ENCODE measurements at regions of chr11 and their contacts with region 1.

Region 1: GRCh38 chr11:62591448-62592145 is at the start of gene TUT1:
- H3K4me3 Mint-ChIP-seq: peak within 1 kb of the TSS; percentile 91
- H3K27ac Mint-ChIP-seq: peak within 1 kb of the TSS; percentile 97
- H3K4me1 Mint-ChIP-seq: peaks cover 39% of the 10 kb centered on the region
- H3K27me3 Mint-ChIP-seq: no peaks in the 10 kb centered on the region

Region 2: GRCh38 chr11:62193952-62194351 is 397.6 kb before region 1 on chr11:
- intact Hi-C with region 1: no loop called
- H3K4me3 Mint-ChIP-seq: no peak overlapping the region
- H3K27ac Mint-ChIP-seq: no peak overlapping the region
- H3K4me1 Mint-ChIP-seq: no peaks in the 10 kb centered on the region
- H3K27me3 Mint-ChIP-seq: peaks cover 29% of the 10 kb centered on the region

Region 3: DNA sequence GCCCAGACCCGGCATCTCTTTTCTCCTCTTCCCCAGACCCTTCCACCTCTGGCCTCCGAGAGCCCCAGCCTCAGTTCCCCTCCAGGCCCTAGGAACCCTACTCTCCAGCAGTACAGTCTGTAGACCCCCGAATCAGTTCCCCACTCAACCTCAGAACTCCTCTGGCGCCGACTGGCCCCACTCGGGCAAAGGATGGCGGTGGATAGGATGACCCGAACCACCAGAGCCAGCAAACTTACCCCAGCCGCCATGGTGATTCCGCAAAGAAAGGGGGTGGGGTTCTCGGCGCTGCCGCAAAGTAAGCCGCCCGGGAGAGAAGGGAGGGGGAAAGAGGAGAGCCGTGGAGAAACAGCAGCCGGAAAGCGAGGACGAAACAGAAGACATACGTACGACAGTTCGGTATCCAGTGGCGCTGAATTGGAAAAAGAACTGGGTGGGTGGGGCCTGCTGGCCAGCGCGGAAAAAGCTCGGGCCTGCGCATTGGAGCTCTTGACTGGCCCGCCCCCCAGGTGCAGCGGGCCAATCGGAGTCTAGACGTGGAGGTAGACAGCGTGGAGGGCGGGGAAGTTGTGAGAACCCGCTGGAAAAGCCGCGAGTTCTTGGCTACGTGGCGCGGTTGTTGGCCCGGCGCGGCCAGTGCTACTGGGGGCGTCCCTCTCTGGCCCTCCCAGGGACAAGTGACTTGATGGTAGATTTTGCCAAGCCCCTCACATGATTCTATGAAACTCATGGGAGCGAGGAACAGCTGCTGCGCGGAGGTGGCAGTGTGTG is 17.8 kb before region 1 on chr11 and contains the start of gene EEF1G:
- intact Hi-C with region 1: loop called (anchors 1 kb)
- H3K4me3 Mint-ChIP-seq: peak within 1 kb of the TSS; percentile 98
- H3K27ac Mint-ChIP-seq: peak within 1 kb of the TSS; percentile 96
- H3K4me1 Mint-ChIP-seq: peaks cover 49% of the 10 kb centered on the region
- H3K27me3 Mint-ChIP-seq: no peaks in the 10 kb centered on the region

Region 4: GRCh38 chr11:62671575-62672389 is 80.2 kb after region 1 on chr11 and contains the starts of genes LBHD1 and UQCC3:
- intact Hi-C with region 1: loop called (anchors 5 kb)
- H3K4me3 Mint-ChIP-seq: peak within 1 kb of the TSS; percentile 95
- H3K27ac Mint-ChIP-seq: peak within 1 kb of the TSS; percentile 96
- H3K4me1 Mint-ChIP-seq: peaks cover 56% of the 10 kb centered on the region
- H3K27me3 Mint-ChIP-seq: no peaks in the 10 kb centered on the region

Region 5: DNA sequence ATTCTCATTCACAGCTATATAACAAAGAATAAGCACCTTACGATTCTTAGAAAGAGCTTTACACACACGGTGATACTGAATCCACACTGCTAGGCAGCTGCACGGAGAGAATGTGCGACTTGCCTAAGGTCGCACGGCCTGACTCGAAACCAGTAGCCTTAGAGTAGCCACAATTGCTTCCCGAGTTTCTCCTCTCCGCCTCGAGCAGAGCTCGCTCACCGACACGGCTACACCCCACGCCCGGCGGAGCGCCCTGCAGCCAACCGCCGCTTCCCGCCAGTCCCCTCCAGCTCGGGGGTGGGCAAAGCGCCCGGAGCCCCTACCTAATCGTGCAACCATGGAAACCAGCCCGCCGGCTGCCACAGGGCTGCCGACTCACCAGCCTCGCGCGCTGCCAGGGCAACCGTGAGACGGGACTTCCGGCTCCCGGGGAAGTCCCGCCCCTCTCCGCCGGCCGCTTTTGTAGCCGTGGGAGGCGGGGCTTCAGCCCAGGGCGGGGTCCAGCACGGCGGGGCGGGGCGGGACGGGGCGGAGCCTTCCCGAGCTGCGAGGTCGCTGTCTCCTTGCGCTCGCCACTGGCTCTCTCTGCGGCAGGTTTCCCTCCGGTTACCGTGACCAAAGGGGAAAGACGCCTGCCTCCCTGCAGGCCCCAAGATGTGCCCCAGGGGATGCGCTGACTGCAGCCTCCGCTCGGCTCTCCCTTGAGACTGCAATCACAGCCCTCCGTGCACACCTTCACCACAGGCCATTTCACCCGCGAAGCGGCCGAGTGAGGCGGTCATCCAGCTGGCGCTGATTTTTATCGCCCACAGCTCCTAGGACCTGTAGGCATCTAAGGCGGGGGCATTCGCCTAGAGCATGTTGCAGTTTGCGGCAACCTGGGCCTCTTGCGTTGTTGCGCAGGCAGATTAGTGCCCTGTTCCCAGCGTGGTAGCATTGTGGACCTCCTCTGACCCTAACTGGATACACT is 114.6 kb after region 1 on chr11:
- intact Hi-C with region 1: loop called (anchors 5 kb)
- H3K4me3 Mint-ChIP-seq: peak overlapping the region; percentile 94
- H3K27ac Mint-ChIP-seq: peak overlapping the region; percentile 92
- H3K4me1 Mint-ChIP-seq: peaks cover 77% of the 10 kb centered on the region
- H3K27me3 Mint-ChIP-seq: no peaks in the 10 kb centered on the region

Region 6: DNA sequence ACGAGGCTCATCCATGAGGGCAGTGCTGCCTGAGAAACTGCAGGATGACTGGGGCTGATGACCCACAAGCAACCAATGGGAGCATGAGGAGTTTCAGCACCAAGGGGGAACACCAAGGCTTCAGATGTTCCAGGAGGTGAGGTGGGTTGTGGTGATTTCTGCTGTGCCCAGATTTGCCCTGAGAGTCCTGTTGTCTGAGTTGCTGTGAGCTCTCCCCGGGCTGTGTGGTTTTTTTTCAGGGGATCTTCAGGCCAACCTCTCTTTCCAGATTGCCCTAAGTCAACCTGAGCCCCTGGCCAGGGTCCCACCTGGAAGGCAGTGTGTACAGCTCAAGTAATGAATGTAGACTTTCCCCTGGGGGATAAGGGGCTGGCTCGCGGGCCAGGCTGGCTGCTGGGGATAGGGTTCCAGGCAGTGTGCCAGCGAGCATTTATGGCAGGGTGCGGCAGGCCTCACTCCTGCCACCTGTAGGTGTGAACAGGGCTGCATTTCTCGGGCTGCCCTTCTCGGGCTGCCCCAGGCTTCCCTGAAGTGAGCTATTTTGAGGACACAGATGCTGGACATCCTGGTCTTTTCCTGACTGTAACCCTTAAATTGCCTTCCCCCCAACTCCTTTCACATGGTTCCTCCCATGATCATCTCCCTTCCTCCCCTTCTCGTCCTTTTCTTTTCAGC is 383.4 kb after region 1 on chr11:
- intact Hi-C with region 1: no loop called
- H3K4me3 Mint-ChIP-seq: no peak overlapping the region
- H3K27ac Mint-ChIP-seq: no peak overlapping the region
- H3K4me1 Mint-ChIP-seq: no peaks in the 10 kb centered on the region
- H3K27me3 Mint-ChIP-seq: peaks cover 26% of the 10 kb centered on the region